Activated CD8-positive, alpha-beta T cell treated with anti-CD3 and anti-CD28 coated beads, Interleukin-2, amount 10 ng/mL, durations not matched to agents 7 days and 5 days (primary cell): ENCODE measurements at regions of chr2 and their contacts with region 1.

Region 1: DNA sequence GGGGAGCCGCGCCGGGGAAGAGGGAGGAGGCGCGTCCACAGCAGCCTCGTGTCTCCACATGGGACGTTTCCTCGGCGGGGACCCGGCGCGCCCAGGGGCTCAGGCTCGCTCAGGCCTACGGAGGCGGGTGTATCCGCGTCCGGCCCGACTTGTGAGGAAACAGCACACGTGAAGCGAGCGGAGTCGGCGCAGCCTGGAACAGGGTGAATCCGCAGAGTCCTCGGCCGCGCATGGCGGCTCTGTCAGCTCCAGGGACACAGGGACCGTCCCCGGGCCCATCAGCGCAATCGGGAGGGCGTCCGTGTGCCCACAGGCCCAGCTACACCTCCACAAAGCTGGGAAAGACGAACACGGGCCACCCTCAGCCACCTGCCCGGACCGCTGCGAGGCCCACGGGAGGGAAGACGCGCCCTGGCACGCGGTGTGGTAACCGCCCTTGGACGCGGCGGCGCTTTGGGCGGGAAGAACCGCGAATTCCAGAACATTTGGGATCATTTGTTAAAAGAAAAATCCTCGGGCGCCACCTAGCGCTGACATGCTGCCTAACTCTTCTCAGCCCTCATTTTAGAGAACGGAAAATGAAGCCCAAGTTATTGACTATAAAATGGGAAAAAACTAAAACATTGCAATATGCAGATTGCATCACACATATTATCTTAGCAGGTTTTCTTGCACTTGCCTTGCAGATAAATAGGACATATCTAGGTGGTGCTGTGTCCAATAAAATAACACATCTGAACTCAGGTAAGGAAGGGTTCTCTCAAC is 40.4 kb downstream of the TMEM18 start:
- DNase-seq: peak; percentile 58
- ATAC-seq: peak; percentile 72
- H3K4me3 Mint-ChIP-seq: peak overlapping the region; percentile 69
- H3K27ac Mint-ChIP-seq: peak overlapping the region; percentile 37
- H3K4me1 Mint-ChIP-seq: no peaks in the 10 kb centered on the region
- H3K27me3 Mint-ChIP-seq: peaks cover 2% of the 10 kb centered on the region

Region 2: GRCh38 chr2:529425-529824 is 107.4 kb before region 1 on chr2:
- CTCF ChIA-PET with region 1: interaction called, 12 read pairs
- POLR2A ChIA-PET with region 1: no interaction called
- DNase-seq: no peak
- ATAC-seq: no peak
- H3K4me3 Mint-ChIP-seq: no peak overlapping the region
- H3K27ac Mint-ChIP-seq: no peak overlapping the region
- H3K4me1 Mint-ChIP-seq: no peaks in the 10 kb centered on the region
- H3K27me3 Mint-ChIP-seq: peaks cover 15% of the 10 kb centered on the region